WTC11 (cell line): ENCODE measurements at regions of chr2 and their contacts with region 1.

Region 1: GRCh38 chr2:233449081-233449901 is 95.0 kb downstream of the DGKD start:
- DNase-seq: peak; percentile 81
- ATAC-seq: peak; percentile 87
- H3K4me3 Mint-ChIP-seq: no peak overlapping the region
- H3K27ac Mint-ChIP-seq: 0 out of 2 replicates have a peak overlapping the region, but pooled peaks have one; percentile 45
- H3K4me1 Mint-ChIP-seq: peaks cover 8% of the 10 kb centered on the region
- H3K27me3 Mint-ChIP-seq: no peaks in the 10 kb centered on the region
- CTCF ChIP-seq: peak; percentile 55

Region 2: DNA sequence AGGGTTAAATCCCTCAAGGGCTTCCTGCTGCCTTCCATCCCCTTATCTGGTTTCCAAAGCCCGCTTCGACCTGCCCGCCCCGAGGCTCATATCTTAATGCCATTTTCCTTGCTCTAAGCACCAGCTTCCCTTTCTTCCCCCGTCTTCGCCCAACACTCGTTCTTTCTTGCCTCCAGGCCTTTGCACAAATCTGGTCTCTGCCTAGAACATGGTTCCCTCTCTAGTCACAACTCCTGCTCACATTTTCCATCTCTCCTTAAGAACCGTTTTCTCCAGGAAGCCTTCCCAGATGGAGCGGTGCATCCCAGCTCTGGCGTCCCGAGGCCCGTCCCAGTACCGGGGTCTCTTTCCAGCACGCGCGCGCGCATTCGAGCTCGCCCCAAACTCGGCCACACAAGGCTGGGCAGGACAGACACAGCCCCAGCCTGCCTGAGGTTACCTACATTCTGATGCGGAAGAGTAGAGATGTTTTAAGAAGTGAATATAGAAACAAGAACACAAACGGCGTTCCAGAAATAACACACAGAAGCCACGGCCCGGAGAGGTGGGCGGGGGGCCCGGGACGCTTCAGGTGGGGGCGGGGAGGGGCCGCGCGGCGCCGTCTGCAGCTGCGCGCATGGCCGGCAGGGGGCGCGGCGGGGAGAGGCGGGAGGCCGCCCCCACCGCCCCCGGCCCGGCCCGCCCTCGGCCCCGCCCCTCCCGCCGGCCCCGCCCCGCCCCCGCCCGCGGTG is 95.4 kb before region 1 on chr2 and contains the start of gene DGKD:
- CTCF ChIA-PET with region 1: interaction called, 25 read pairs
- POLR2A ChIA-PET with region 1: no interaction called
- DNase-seq: peak; percentile 65
- ATAC-seq: peak; percentile 79
- H3K4me3 Mint-ChIP-seq: peak within 1 kb of the TSS; percentile 94
- H3K27ac Mint-ChIP-seq: peak within 1 kb of the TSS; percentile 35
- H3K4me1 Mint-ChIP-seq: peaks cover 27% of the 10 kb centered on the region
- H3K27me3 Mint-ChIP-seq: peaks cover 36% of the 10 kb centered on the region
- CTCF ChIP-seq: no peak; the same call in 1 of the 2 replicates
- total RNA-seq, gene DGKD: 30.6 to 41.4 TPM (median 31.9 TPM) in 3 replicates

Region 3: DNA sequence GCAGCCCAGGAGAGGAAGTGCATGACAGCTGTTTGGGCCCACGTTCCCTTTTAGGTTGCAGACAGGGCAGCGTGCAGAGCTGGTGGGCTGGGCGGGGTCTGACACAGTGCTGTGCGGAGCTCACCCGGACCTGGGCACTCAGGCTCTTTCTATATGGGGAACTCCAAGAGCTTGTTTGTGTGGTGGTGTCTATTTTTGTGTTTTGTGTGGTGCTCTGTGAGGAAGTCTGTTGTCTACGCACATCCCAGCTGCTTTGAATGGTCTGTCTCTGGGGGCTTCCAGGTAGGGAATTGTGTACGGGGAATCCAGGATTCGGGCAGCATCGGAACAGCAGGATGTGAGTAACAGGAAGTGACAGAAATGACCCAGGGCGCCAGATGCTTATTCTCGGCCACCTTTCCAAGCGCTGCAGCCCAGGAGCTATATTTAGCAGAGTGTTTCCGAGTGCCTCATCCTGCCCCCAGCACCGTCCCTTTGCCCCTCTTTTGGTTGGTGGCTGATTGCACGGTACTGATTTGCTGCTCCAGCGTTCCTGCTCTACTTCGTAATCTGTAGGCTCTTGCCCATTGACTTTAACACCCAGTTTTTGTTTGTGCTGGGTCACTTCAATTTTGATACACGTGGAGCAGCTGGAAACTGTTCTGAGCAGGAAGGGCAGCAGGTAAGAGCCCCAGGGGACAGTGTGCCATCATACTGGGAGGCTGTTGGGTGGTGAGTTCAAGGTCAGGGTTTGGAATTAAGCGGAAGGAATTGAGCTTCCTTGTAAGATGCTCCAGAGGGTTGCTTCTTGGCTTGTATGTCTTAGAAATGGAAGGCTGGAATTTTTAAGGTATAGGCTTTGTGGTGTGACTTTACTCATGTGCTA is 30.3 kb before region 1 on chr2:
- CTCF ChIA-PET with region 1: interaction called, 21 read pairs
- POLR2A ChIA-PET with region 1: no interaction called
- DNase-seq: no peak
- ATAC-seq: no peak
- H3K4me3 Mint-ChIP-seq: no peak overlapping the region
- H3K27ac Mint-ChIP-seq: peak overlapping the region; percentile 69
- H3K4me1 Mint-ChIP-seq: peaks cover 45% of the 10 kb centered on the region
- H3K27me3 Mint-ChIP-seq: no peaks in the 10 kb centered on the region
- CTCF ChIP-seq: no peak

Region 4: DNA sequence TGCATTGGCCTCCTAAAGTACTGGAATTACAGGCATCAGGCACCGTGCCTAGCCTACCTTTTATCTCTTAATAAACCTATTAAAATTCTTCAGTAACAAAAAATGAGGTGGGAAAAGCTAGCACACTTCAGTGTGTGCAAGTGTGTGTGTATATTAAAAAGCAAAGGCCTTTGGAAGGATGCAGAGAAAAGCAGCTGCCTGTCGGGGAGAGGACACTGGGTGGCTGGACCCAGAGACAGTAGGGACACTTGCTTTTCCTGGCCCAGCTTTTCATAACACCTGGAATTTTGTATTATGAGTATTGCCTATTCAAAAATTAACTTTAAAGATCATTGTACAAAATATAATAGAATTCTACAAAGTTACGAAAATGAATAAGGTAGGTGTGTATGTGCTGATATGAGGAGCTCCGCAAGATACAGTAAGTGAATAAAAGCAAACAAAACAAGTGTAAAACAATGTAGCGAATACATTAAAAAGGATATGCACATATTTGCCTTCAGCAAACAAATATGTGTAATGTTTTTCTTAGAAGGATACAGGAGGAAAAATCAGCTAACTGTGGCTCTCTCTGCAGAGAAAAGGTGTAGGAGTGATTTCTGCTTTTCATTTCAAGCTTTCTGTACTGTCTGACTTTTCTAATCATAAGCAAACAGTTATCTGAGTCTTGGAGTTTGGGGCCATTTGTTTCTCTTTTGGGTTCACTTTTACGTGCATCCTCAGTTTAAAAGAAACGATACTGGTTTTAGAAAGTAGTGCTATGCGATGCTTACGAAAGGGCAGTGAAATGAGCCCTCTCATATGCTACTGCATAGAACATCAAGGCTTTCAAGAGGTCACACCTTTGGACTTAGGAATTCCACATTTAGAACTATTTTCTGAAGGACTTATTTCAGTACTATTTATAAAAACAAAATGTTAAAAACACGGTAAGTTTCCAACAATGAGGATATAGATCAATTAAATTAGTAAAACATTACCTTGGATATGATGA is 46.5 kb after region 1 on chr2:
- CTCF ChIA-PET with region 1: interaction called, 11 read pairs
- POLR2A ChIA-PET with region 1: no interaction called
- DNase-seq: no peak
- ATAC-seq: no peak
- H3K4me3 Mint-ChIP-seq: no peak overlapping the region
- H3K27ac Mint-ChIP-seq: no peak overlapping the region
- H3K4me1 Mint-ChIP-seq: peaks cover 5% of the 10 kb centered on the region
- H3K27me3 Mint-ChIP-seq: no peaks in the 10 kb centered on the region
- CTCF ChIP-seq: no peak

Region 5: GRCh38 chr2:233832869-233833311 is 383.6 kb after region 1 on chr2:
- CTCF ChIA-PET with region 1: interaction called, 30 read pairs
- POLR2A ChIA-PET with region 1: no interaction called
- DNase-seq: peak; percentile 80
- ATAC-seq: peak; percentile 95
- H3K4me3 Mint-ChIP-seq: no peak overlapping the region
- H3K27ac Mint-ChIP-seq: no peak overlapping the region
- H3K4me1 Mint-ChIP-seq: peaks cover 7% of the 10 kb centered on the region
- H3K27me3 Mint-ChIP-seq: no peaks in the 10 kb centered on the region
- CTCF ChIP-seq: no peak